ENCODE measurements at regions of chr1 and their contacts with region 1.

Region 1: DNA sequence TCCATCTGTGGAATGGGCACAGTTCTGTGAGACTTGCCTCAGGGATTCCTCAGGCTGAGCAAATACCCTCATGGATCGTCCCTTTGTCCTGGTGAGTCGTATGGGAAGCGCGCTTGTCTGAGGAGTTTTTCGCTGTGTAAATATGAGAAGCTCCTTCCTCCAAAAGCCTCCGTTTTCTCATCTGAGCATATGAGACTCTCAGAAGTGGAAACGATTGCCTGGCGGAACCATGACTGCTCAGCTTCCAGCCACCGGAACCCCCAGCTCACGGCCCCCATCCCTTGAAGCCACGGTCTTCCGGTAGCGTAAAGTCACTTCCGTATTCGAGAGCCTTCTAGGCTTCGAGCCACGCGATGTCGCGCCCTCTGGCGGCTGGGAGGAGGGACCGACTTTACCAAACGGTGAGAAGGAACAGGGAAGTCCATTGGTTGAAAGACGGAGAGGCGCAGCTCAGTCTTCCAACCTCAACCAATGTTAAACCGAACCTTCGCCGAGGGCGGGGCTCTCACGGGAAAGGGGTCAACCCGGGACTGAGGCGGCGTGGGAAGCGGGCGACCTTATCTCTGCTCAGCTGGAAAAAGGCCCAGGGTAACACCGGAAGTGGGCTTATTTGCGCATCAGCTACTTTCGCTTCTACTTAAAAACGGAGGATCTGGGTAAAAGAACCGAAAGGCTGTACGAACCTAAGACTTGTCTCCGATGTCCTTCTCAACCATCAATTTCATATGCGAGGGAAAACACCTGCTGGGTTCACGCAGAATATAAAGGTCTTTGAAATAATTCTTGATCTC is 46.2 kb downstream of the AZIN2 start:
- DNase-seq: peak; percentile 95 to 100 (median 99)
- ATAC-seq: peak; percentile 92
- H3K4me3 ChIP-seq: peak overlapping the region; percentile 61 to 74
- H3K4me3 Mint-ChIP-seq: peak overlapping the region; percentile 93
- H3K27ac ChIP-seq: peak overlapping the region; percentile 68 to 96
- H3K27ac Mint-ChIP-seq: peak overlapping the region; percentile 92
- H3K4me1 ChIP-seq: peaks cover 26% of the 10 kb centered on the region
- H3K4me1 Mint-ChIP-seq: peaks cover 52% of the 10 kb centered on the region
- H3K27me3 ChIP-seq: no peaks in the 10 kb centered on the region
- H3K27me3 Mint-ChIP-seq: no peaks in the 10 kb centered on the region
- CTCF ChIP-seq: peak; percentile 90

Region 2: DNA sequence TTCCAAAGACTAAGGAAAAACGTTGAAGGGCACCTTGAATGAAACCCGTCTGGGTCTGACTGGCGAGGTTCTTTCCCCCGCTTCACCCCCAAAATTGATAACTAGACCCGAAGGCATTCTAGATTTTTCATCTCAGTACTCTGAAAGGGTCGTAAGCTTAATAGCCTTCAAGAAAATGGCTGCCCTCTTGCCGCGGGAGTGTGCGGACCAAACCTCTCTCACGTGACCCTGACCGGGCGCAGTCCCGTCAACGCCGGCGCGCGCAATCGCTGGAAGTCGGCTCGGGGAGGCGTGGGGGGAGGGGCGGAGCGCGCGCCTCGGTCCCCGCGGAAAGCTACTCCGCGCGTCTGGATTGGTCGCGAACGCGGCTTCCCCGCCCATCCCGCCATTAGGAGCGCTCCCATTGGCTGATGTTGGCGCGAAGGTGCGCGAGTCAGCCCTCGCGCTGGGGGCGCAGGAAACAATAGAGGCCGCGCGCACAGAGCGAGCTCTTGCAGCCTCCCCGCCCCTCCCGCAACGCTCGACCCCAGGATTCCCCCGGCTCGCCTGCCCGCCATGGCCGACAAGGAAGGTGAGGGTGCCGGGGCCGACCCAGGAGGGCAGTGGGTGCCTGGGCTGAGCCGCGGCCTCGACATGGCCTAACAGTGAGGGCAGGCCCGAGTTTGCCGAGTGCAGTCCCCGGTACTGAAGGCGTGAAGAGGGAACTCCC is 476.3 kb before region 1 on chr1 and contains the start of gene RBBP4:
- CTCF ChIA-PET with region 1: interaction called, 3 read pairs
- POLR2A ChIA-PET with region 1: no interaction called
- intact Hi-C with region 1: loop called in 1 of 2 experiments (anchors 1 kb)
- DNase-seq: peak; percentile 96 to 100 (median 99)
- ATAC-seq: peak; percentile 83
- H3K4me3 ChIP-seq: peak within 1 kb of the TSS; percentile 82 to 97
- H3K4me3 Mint-ChIP-seq: peak within 1 kb of the TSS; percentile 93
- H3K27ac ChIP-seq: peak within 1 kb of the TSS; percentile 98 to 99
- H3K27ac Mint-ChIP-seq: peak within 1 kb of the TSS; percentile 99
- H3K4me1 ChIP-seq: peaks cover 51% of the 10 kb centered on the region
- H3K4me1 Mint-ChIP-seq: peaks cover 60% of the 10 kb centered on the region
- H3K27me3 ChIP-seq: no peaks in the 10 kb centered on the region
- H3K27me3 Mint-ChIP-seq: no peaks in the 10 kb centered on the region
- CTCF ChIP-seq: no peak
- total RNA-seq, gene RBBP4: 109 to 121 TPM

Region 3: GRCh38 chr1:32964461-32965250 is 162.5 kb before region 1 on chr1 and contains the start of gene RNF19B:
- CTCF ChIA-PET with region 1: interaction called, 3 read pairs
- POLR2A ChIA-PET with region 1: interaction called, 23 read pairs
- intact Hi-C with region 1: loop called (anchors 1 kb)
- DNase-seq: peak; percentile 89 to 97 (median 93)
- ATAC-seq: peak; percentile 93
- H3K4me3 ChIP-seq: peak within 1 kb of the TSS; percentile 68 to 70
- H3K4me3 Mint-ChIP-seq: peak within 1 kb of the TSS; percentile 88
- H3K27ac ChIP-seq: peak within 1 kb of the TSS; percentile 51 to 75
- H3K27ac Mint-ChIP-seq: peak within 1 kb of the TSS; percentile 91
- H3K4me1 ChIP-seq: peaks cover 24% of the 10 kb centered on the region
- H3K4me1 Mint-ChIP-seq: peaks cover 38% of the 10 kb centered on the region
- H3K27me3 ChIP-seq: peaks cover 0 to 3% of the 10 kb centered on the region in 2 experiments
- H3K27me3 Mint-ChIP-seq: no peaks in the 10 kb centered on the region
- CTCF ChIP-seq: no peak
- total RNA-seq, gene RNF19B: 43.9 to 44.6 TPM

Region 4: DNA sequence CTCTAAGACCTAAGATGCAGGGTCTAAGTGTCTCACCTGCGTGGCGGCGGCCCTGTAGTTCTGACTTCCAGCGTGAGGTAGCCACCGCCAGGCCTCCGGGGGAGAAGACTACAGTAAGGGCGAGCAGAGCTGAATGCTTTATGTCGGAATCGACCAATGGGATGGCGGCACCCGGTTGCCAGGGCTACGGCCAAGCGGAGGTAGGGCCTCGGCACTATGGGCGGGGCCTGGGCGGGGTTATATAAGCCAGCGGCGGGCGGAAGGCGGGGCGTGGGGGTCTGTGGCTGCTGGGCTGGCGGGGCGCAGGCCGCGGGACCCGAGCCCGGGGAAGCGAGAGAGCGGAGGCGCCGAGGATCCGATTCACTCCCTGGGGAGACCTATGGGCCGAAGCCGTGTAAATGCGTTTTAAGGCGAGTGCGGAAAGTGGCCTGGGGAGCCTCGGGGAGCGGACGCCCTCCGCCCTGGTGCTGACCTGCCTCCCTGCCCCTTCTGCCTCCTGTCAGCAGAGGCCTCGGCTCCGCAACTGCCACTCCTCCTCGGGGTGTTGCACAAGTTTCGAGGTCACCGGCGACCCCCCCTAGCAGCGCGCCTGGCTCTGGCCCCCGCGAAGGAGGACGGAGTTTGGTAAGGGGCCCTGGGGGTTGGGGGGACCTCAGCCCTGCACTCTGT is 46.2 kb before region 1 on chr1 and contains the start of gene AZIN2:
- CTCF ChIA-PET with region 1: interaction called, 9 read pairs
- POLR2A ChIA-PET with region 1: interaction called, 12 read pairs
- intact Hi-C with region 1: loop called (anchors 1 kb)
- DNase-seq: peak; percentile 92 to 100 (median 97)
- ATAC-seq: peak; percentile 99
- H3K4me3 ChIP-seq: peak within 1 kb of the TSS; percentile 57 to 89
- H3K4me3 Mint-ChIP-seq: peak within 1 kb of the TSS; percentile 82
- H3K27ac ChIP-seq: peak within 1 kb of the TSS; percentile 28 to 54
- H3K27ac Mint-ChIP-seq: peak within 1 kb of the TSS; percentile 82
- H3K4me1 ChIP-seq: peaks cover 22% of the 10 kb centered on the region
- H3K4me1 Mint-ChIP-seq: peaks cover 29% of the 10 kb centered on the region
- H3K27me3 ChIP-seq: peaks cover 0 to 2% of the 10 kb centered on the region in 2 experiments
- H3K27me3 Mint-ChIP-seq: no peaks in the 10 kb centered on the region
- CTCF ChIP-seq: no peak
- total RNA-seq, gene AZIN2: 3.5 to 4.1 TPM

Region 5: GRCh38 chr1:33137800-33138199 is 10.6 kb after region 1 on chr1:
- CTCF ChIA-PET with region 1: interaction called, 10 read pairs
- POLR2A ChIA-PET with region 1: interaction called, 8 read pairs
- intact Hi-C with region 1: no loop called
- DNase-seq: peak in 8 of 9 experiments; percentile 11 to 61 (median 50)
- ATAC-seq: peak; percentile 62
- H3K4me3 ChIP-seq: no peak overlapping the region
- H3K4me3 Mint-ChIP-seq: no peak overlapping the region
- H3K27ac ChIP-seq: no peak overlapping the region
- H3K27ac Mint-ChIP-seq: no peak overlapping the region
- H3K4me1 ChIP-seq: no peaks in the 10 kb centered on the region
- H3K4me1 Mint-ChIP-seq: peaks cover 6% of the 10 kb centered on the region
- H3K27me3 ChIP-seq: no peaks in the 10 kb centered on the region
- H3K27me3 Mint-ChIP-seq: no peaks in the 10 kb centered on the region
- CTCF ChIP-seq: peak; percentile 36

Region 6: GRCh38 chr1:33211972-33212371 is 84.8 kb after region 1 on chr1:
- CTCF ChIA-PET with region 1: no interaction called
- POLR2A ChIA-PET with region 1: no interaction called
- intact Hi-C with region 1: no loop called
- DNase-seq: no peak
- ATAC-seq: no peak
- H3K4me3 ChIP-seq: no peak overlapping the region
- H3K4me3 Mint-ChIP-seq: no peak overlapping the region
- H3K27ac ChIP-seq: no peak overlapping the region
- H3K27ac Mint-ChIP-seq: no peak overlapping the region
- H3K4me1 ChIP-seq: no peaks in the 10 kb centered on the region
- H3K4me1 Mint-ChIP-seq: no peaks in the 10 kb centered on the region
- H3K27me3 ChIP-seq: peaks cover 0 to 4% of the 10 kb centered on the region in 2 experiments
- H3K27me3 Mint-ChIP-seq: peaks cover 26% of the 10 kb centered on the region
- CTCF ChIP-seq: no peak

Region 7: GRCh38 chr1:33228935-33229487 is 101.8 kb after region 1 on chr1:
- CTCF ChIA-PET with region 1: no interaction called
- POLR2A ChIA-PET with region 1: no interaction called
- intact Hi-C with region 1: no loop called
- DNase-seq: no peak
- ATAC-seq: no peak
- H3K4me3 ChIP-seq: no peak overlapping the region
- H3K4me3 Mint-ChIP-seq: no peak overlapping the region
- H3K27ac ChIP-seq: no peak overlapping the region
- H3K27ac Mint-ChIP-seq: no peak overlapping the region
- H3K4me1 ChIP-seq: no peaks in the 10 kb centered on the region
- H3K4me1 Mint-ChIP-seq: peaks cover 4% of the 10 kb centered on the region
- H3K27me3 ChIP-seq: no peaks in the 10 kb centered on the region
- H3K27me3 Mint-ChIP-seq: peaks cover 17% of the 10 kb centered on the region
- CTCF ChIP-seq: no peak

Region 8: GRCh38 chr1:33256701-33257399 is 129.7 kb after region 1 on chr1:
- CTCF ChIA-PET with region 1: interaction called, 3 read pairs
- POLR2A ChIA-PET with region 1: no interaction called
- intact Hi-C with region 1: loop called (anchors 1 kb)
- DNase-seq: peak; percentile 13 to 73 (median 55)
- ATAC-seq: peak; percentile 65
- H3K4me3 ChIP-seq: peak overlapping the region; percentile 62 to 75
- H3K4me3 Mint-ChIP-seq: peak overlapping the region; percentile 99
- H3K27ac ChIP-seq: peak overlapping the region; percentile 48 to 51
- H3K27ac Mint-ChIP-seq: peak overlapping the region; percentile 97
- H3K4me1 ChIP-seq: peaks cover 42% of the 10 kb centered on the region
- H3K4me1 Mint-ChIP-seq: peaks cover 47% of the 10 kb centered on the region
- H3K27me3 ChIP-seq: no peaks in the 10 kb centered on the region
- H3K27me3 Mint-ChIP-seq: no peaks in the 10 kb centered on the region
- CTCF ChIP-seq: no peak

Region 9: DNA sequence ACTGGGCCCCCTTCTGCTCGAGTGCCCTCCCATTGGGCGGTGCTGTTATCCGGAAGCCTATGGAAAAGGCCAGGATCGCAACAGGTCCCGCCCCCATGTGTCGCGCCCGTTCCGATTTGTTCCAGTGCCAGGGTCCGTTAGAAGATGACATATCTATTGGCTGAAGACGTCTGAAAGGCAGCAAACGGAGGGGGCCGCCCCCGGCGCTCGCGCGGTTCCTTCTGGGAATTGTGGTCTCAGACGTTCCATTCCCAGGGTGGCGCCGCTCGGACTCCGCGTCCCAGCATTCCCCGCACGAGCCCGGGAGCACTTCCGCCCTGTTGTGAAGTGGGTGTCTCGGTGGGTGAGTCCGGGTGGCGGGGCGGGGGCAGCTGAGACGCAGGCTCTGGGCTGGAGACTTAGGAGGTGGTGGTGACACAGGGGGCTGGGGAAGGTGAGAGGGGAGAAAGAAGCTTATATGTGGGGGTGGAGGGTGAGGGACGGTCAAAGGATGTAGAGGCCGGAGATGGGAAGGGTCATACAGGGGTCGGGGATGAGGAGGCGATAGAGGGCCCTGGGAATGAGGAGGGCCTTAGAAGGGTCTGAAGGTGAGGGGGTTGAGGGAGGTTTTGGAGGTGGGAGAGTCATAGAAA is 345.3 kb after region 1 on chr1 and contains the start of gene ZSCAN20:
- CTCF ChIA-PET with region 1: no interaction called
- POLR2A ChIA-PET with region 1: no interaction called
- intact Hi-C with region 1: loop called in 1 of 2 experiments (anchors 5 kb)
- DNase-seq: peak; percentile 59 to 92 (median 84)
- ATAC-seq: peak; percentile 98
- H3K4me3 ChIP-seq: peak within 1 kb of the TSS; percentile 29 to 49
- H3K4me3 Mint-ChIP-seq: peak within 1 kb of the TSS; percentile 87
- H3K27ac ChIP-seq: peak within 1 kb of the TSS in 1 of 2 experiments; percentile 67
- H3K27ac Mint-ChIP-seq: peak within 1 kb of the TSS; percentile 80
- H3K4me1 ChIP-seq: peaks cover 10% of the 10 kb centered on the region
- H3K4me1 Mint-ChIP-seq: peaks cover 31% of the 10 kb centered on the region
- H3K27me3 ChIP-seq: no peaks in the 10 kb centered on the region
- H3K27me3 Mint-ChIP-seq: no peaks in the 10 kb centered on the region
- CTCF ChIP-seq: no peak
- total RNA-seq, gene ZSCAN20: 0.19 TPM

Measured in CD8-positive, alpha-beta T cell (primary cell).